IMR-90 (cell line): ENCODE measurements at regions of chr19 and their contacts with region 1.

Region 1: GRCh38 chr19:2064788-2065524 is 13.9 kb upstream of the MKNK2 start:
- DNase-seq: no peak
- ATAC-seq: no peak
- H3K4me3 ChIP-seq: no peak overlapping the region
- H3K27ac ChIP-seq: no peak overlapping the region
- H3K4me1 ChIP-seq: peaks cover 14% of the 10 kb centered on the region
- H3K27me3 ChIP-seq: no peaks in the 10 kb centered on the region
- CTCF ChIP-seq: no peak
- POLR2A ChIP-seq: no peak
- RAD21 ChIP-seq: no peak

Region 2: GRCh38 chr19:1929021-1929742 is 135.8 kb before region 1 on chr19:
- CTCF ChIA-PET with region 1: interaction called, 4 read pairs
- POLR2A ChIA-PET with region 1: no interaction called
- dilution Hi-C with region 1: no loop called
- in situ Hi-C with region 1: no loop called
- intact Hi-C with region 1: loop called (anchors 1 kb)
- DNase-seq: peak; percentile 52
- ATAC-seq: peak; percentile 95
- H3K4me3 ChIP-seq: peak overlapping the region; percentile 45
- H3K27ac ChIP-seq: no peak overlapping the region
- H3K4me1 ChIP-seq: peaks cover 6% of the 10 kb centered on the region
- H3K27me3 ChIP-seq: no peaks in the 10 kb centered on the region
- CTCF ChIP-seq: peak; percentile 84
- POLR2A ChIP-seq: no peak
- RAD21 ChIP-seq: peak; percentile 73

Region 3: DNA sequence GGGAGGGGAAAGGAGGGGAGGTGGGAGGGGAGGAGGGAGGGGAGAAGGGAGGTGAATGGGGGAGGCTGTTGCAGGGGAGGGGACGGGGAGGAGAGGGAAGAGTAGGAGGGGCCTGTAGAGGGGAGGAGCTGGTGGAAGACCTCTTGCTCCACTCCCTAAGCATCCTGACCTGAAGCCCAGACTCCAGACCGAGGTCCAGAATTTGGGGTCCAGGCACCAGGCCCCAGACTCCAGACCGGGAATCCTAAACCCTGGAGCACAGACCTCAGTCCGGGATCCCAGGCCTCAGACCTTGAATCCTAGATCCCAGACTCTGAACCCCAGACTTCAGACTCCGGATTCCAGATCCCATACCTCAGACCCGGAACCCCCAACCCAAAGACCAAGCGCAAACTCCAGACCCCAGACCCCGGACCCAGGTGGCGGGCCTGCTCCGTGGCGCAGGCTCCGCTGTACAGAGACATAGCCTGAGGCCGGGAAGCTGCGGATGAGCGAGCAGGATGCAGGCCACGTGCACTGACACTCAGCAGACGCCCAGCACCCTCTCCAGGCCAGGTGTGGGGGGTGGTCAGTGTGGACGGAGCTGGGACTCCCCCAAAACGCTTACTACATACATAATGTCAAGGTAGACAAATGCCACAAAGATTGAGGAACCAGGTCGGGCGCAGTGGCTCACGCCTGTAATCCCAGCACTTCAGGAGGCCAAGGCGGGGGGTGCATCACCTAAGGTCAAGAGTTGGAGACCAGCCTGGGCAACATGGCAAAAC is 48.7 kb before region 1 on chr19:
- CTCF ChIA-PET with region 1: interaction called, 5 read pairs
- POLR2A ChIA-PET with region 1: no interaction called
- dilution Hi-C with region 1: no loop called
- in situ Hi-C with region 1: loop called (anchors 5 kb)
- intact Hi-C with region 1: loop called (anchors 1 kb)
- DNase-seq: peak; percentile 81
- ATAC-seq: peak; percentile 83
- H3K4me3 ChIP-seq: peak overlapping the region; percentile 30
- H3K27ac ChIP-seq: no peak overlapping the region
- H3K4me1 ChIP-seq: peaks cover 14% of the 10 kb centered on the region
- H3K27me3 ChIP-seq: no peaks in the 10 kb centered on the region
- CTCF ChIP-seq: no peak
- POLR2A ChIP-seq: no peak
- RAD21 ChIP-seq: no peak

Region 4: GRCh38 chr19:2021453-2022140 is 43.4 kb before region 1 on chr19:
- CTCF ChIA-PET with region 1: interaction called, 5 read pairs
- POLR2A ChIA-PET with region 1: no interaction called
- dilution Hi-C with region 1: no loop called
- in situ Hi-C with region 1: loop called (anchors 5 kb)
- intact Hi-C with region 1: loop called (anchors 1 kb)
- DNase-seq: no peak
- ATAC-seq: no peak
- H3K4me3 ChIP-seq: no peak overlapping the region
- H3K27ac ChIP-seq: no peak overlapping the region
- H3K4me1 ChIP-seq: no peaks in the 10 kb centered on the region
- H3K27me3 ChIP-seq: peaks cover 2% of the 10 kb centered on the region; the same call in 1 of the 2 replicates
- CTCF ChIP-seq: no peak
- POLR2A ChIP-seq: no peak
- RAD21 ChIP-seq: no peak